Activated CD8-positive, alpha-beta T cell treated with anti-CD3 and anti-CD28 coated beads, Interleukin-2, amount 10 ng/mL, durations not matched to agents 7 days and 5 days (primary cell): ENCODE measurements at regions of chr5 and their contacts with region 1.

Region 1: DNA sequence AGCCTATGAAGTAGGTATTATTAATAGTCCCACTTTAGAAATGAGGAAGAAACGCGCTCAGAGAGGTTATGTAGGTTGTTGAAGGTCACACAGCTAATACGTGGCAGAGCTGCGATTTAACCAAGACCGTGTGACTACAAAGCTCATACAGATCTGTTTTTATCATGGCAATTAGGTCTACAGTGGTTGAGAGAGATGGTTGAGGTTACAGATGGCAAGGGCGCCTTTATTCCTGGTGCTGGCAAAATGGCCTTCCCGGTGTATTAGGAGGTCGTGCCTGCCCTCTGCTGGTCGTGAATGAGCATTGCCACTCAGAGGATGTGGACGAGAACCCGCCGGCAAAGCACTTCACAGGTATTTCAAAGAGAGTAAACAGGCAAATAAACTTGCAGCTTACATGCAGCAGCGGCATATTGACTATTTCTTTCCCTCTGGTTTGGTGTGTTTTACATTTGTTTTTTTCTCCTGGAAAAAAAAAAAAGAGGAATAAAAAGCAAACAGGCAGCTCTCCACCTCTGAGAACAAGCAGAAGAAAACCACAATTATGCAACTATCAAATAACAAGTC is 65.3 kb upstream of the EGFLAM start:
- DNase-seq: peak; percentile 65
- ATAC-seq: no peak
- H3K4me3 Mint-ChIP-seq: no peak overlapping the region
- H3K27ac Mint-ChIP-seq: no peak overlapping the region
- H3K4me1 Mint-ChIP-seq: no peaks in the 10 kb centered on the region
- H3K27me3 Mint-ChIP-seq: peaks cover 12% of the 10 kb centered on the region

Region 2: GRCh38 chr5:37412515-37413277 is 780.4 kb before region 1 on chr5:
- CTCF ChIA-PET with region 1: interaction called, 39 read pairs
- POLR2A ChIA-PET with region 1: no interaction called
- DNase-seq: peak; percentile 55
- ATAC-seq: peak; percentile 63
- H3K4me3 Mint-ChIP-seq: no peak overlapping the region
- H3K27ac Mint-ChIP-seq: no peak overlapping the region
- H3K4me1 Mint-ChIP-seq: no peaks in the 10 kb centered on the region
- H3K27me3 Mint-ChIP-seq: no peaks in the 10 kb centered on the region

Region 3: GRCh38 chr5:37774912-37775483 is 418.1 kb before region 1 on chr5:
- CTCF ChIA-PET with region 1: interaction called, 12 read pairs
- POLR2A ChIA-PET with region 1: no interaction called
- DNase-seq: peak; percentile 54
- ATAC-seq: no peak
- H3K4me3 Mint-ChIP-seq: no peak overlapping the region
- H3K27ac Mint-ChIP-seq: no peak overlapping the region
- H3K4me1 Mint-ChIP-seq: no peaks in the 10 kb centered on the region
- H3K27me3 Mint-ChIP-seq: no peaks in the 10 kb centered on the region

Region 4: GRCh38 chr5:38182991-38183390 is 10.1 kb before region 1 on chr5:
- CTCF ChIA-PET with region 1: interaction called, 11 read pairs
- POLR2A ChIA-PET with region 1: no interaction called
- DNase-seq: no peak
- ATAC-seq: no peak
- H3K4me3 Mint-ChIP-seq: no peak overlapping the region
- H3K27ac Mint-ChIP-seq: no peak overlapping the region
- H3K4me1 Mint-ChIP-seq: no peaks in the 10 kb centered on the region
- H3K27me3 Mint-ChIP-seq: peaks cover 8% of the 10 kb centered on the region